ENCODE measurements at regions of chr2 and their contacts with region 1.

Region 1: DNA sequence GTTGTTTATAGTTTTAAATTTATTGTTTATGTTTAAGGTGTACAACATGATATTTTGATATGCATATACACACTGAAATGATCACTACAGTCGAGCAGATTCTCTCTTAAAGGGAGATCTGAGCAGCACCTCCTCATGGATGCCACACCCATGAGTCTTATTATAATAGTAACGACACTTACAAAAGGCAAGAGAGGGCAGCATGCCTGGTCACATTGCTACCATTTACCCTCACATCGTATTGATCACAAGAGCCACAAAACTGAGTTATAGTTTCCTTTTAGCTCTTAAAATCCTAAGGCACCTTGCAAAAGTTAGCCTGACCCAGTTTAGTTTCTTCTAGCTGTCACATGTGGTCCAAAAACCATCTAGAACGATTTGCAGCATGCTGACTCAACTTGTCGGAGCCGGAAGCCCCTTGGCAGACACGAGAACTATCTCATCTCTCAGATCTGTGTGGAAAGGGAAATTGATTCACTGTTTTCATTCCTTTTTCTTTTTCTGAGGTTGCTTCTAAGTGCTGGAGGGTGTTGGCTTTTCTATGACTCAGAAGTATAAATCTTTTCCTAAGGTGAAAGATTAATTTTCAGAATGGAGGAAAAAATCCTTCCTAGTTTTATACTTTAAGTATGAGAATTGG is 85.3 kb downstream of the CDC42EP3 start:
- DNase-seq: peak; percentile 14 to 71 (median 61)
- ATAC-seq: peak; percentile 92
- H3K4me3 ChIP-seq: no peak overlapping the region
- H3K4me3 Mint-ChIP-seq: peak overlapping the region; percentile 1 to 76 (median 58)
- H3K27ac ChIP-seq: peak overlapping the region; percentile 6
- H3K27ac Mint-ChIP-seq: peak overlapping the region; percentile 11 to 86 (median 62)
- H3K4me1 ChIP-seq: peaks cover 39 to 75% of the 10 kb centered on the region in 2 donors
- H3K4me1 Mint-ChIP-seq: peaks cover 49 to 81% (median 56%) of the 10 kb centered on the region in 7 donors
- H3K27me3 ChIP-seq: no peaks in the 10 kb centered on the region
- H3K27me3 Mint-ChIP-seq: no peaks in the 10 kb centered on the region

Region 2: GRCh38 chr2:37537316-37537715 is 48.8 kb before region 1 on chr2:
- CTCF ChIA-PET with region 1: no interaction called
- POLR2A ChIA-PET with region 1: interaction called, 3 read pairs
- intact Hi-C with region 1: loop called in 1 of 2 experiments (anchors 1 kb)
- DNase-seq: no peak
- ATAC-seq: no peak
- H3K4me3 ChIP-seq: no peak overlapping the region
- H3K4me3 Mint-ChIP-seq: no peak overlapping the region
- H3K27ac ChIP-seq: no peak overlapping the region
- H3K27ac Mint-ChIP-seq: no peak overlapping the region
- H3K4me1 ChIP-seq: no peaks in the 10 kb centered on the region
- H3K4me1 Mint-ChIP-seq: peaks cover 0 to 5% (median 3%) of the 10 kb centered on the region in 7 donors
- H3K27me3 ChIP-seq: no peaks in the 10 kb centered on the region
- H3K27me3 Mint-ChIP-seq: peaks cover 0 to 28% (median 0%) of the 10 kb centered on the region in 5 donors

Region 3: GRCh38 chr2:37570773-37571586 is 15.1 kb before region 1 on chr2:
- CTCF ChIA-PET with region 1: no interaction called
- POLR2A ChIA-PET with region 1: interaction called, 3 read pairs
- intact Hi-C with region 1: loop called in 1 of 2 experiments (anchors 2 kb)
- DNase-seq: no peak
- ATAC-seq: no peak
- H3K4me3 ChIP-seq: no peak overlapping the region
- H3K4me3 Mint-ChIP-seq: no peak overlapping the region
- H3K27ac ChIP-seq: no peak overlapping the region
- H3K27ac Mint-ChIP-seq: no peak overlapping the region
- H3K4me1 ChIP-seq: peaks cover 0 to 11% of the 10 kb centered on the region in 2 donors
- H3K4me1 Mint-ChIP-seq: peaks cover 6 to 23% (median 10%) of the 10 kb centered on the region in 7 donors
- H3K27me3 ChIP-seq: no peaks in the 10 kb centered on the region
- H3K27me3 Mint-ChIP-seq: peaks cover 0 to 7% (median 0%) of the 10 kb centered on the region in 5 donors

Region 4: GRCh38 chr2:37615804-37616676 is 29.9 kb after region 1 on chr2:
- CTCF ChIA-PET with region 1: interaction called, 4 read pairs
- POLR2A ChIA-PET with region 1: interaction called, 3 read pairs
- intact Hi-C with region 1: loop called (anchors 1 to 5 kb)
- DNase-seq: peak in 8 of 9 donors; percentile 39 to 78 (median 70)
- ATAC-seq: peak; percentile 92
- H3K4me3 ChIP-seq: no peak overlapping the region
- H3K4me3 Mint-ChIP-seq: peak overlapping the region; percentile 10 to 70 (median 40)
- H3K27ac ChIP-seq: peak overlapping the region; percentile 49
- H3K27ac Mint-ChIP-seq: peak overlapping the region; percentile 82 to 96 (median 92)
- H3K4me1 ChIP-seq: peaks cover 22 to 47% of the 10 kb centered on the region in 2 donors
- H3K4me1 Mint-ChIP-seq: peaks cover 28 to 36% (median 30%) of the 10 kb centered on the region in 7 donors
- H3K27me3 ChIP-seq: no peaks in the 10 kb centered on the region
- H3K27me3 Mint-ChIP-seq: no peaks in the 10 kb centered on the region

Region 5: DNA sequence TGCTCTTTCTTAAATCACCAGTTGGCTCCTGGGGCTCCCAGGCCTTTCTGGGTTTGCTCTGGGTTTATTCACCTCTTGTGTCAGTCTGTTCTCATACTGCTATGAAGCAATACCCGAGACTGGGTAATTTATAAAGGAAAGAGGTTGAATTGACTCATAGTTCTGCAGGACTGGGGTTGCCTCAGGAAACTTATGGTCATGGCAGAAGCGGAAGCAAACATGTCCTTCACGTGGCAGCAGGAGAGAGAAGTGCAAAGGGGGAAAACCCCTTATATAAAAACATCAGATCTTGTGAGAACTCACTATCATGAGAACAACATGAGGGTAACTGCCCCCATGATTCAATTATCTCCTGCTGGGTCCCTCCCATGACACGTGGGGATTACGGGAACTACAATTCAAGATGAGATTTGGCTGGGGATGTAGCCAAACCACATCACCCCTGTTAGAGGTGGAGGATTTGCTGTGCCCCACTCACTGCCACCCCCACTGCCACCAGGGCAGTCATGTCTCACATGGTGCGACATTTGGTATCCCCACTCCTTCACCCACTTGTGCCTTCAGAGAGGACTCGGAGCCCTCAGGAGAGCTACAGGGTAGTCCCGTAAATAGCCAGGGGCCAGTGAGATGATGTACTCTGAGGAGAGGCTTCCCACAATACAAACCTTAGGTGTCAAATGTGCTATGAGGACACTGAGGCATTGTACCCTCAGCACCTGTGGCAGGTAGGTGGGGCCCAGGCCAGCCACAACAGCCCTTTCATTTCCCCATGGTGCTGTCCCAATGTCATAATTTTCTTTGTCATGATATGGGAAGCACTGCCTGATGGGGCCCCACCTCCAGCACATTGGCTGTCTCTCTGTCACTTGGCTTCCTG is 49.6 kb after region 1 on chr2:
- CTCF ChIA-PET with region 1: no interaction called
- POLR2A ChIA-PET with region 1: no interaction called
- intact Hi-C with region 1: loop called in 1 of 2 experiments (anchors 1 kb)
- DNase-seq: peak; percentile 20 to 77 (median 39)
- ATAC-seq: peak; percentile 87
- H3K4me3 ChIP-seq: no peak overlapping the region
- H3K4me3 Mint-ChIP-seq: peak overlapping the region in 8 of 10 donors; percentile 13 to 49 (median 40)
- H3K27ac ChIP-seq: peak overlapping the region; percentile 41
- H3K27ac Mint-ChIP-seq: peak overlapping the region; percentile 5 to 84 (median 80)
- H3K4me1 ChIP-seq: peaks cover 24 to 58% of the 10 kb centered on the region in 2 donors
- H3K4me1 Mint-ChIP-seq: peaks cover 31 to 70% (median 36%) of the 10 kb centered on the region in 7 donors
- H3K27me3 ChIP-seq: no peaks in the 10 kb centered on the region
- H3K27me3 Mint-ChIP-seq: peaks cover 0 to 13% (median 0%) of the 10 kb centered on the region in 5 donors